ENCODE measurements at regions of chr3 and their contacts with region 1.

Region 1: GRCh38 chr3:149352556-149352955 is 19.1 kb upstream of the TM4SF18 start:
- DNase-seq: no peak

Region 2: GRCh38 chr3:149382091-149382467 is 29.5 kb after region 1 on chr3:
- intact Hi-C with region 1: no loop called
- DNase-seq: no peak

Region 3: DNA sequence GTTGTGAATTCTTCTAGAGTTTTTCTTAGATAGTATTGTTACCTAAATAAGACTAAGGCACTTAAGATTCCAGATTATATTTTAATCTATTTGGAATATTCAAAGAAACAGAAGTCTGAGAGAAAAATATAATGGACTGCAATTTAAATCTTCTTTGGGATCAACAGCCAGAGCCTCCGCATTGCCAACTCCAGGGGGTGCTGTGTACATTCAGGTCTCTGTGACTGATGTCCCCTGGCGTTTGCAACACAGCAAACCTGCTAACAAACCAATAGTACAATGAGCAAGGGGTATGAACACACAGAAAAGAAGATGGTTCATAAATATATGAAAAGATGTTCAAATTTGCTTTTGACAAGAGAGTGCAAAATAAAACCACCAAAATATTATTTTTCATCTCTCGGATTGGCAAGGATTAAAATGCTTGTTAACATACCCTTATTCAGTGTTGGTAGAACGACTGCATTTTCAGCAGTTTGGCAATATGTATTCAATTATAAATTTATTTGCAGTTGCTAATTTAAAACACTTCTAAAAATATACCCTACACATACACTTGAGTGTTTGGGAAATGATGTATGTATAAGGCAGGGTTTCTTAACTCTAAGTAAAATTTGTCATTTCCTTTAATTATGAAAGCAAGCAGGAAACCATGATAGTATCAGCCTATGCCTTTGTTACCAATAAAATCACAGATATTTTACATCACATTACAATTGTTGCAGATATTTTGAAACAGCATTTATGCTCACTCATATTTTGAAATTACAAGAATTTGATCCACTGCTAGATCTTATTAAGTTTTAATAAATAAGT is 41.0 kb after region 1 on chr3:
- intact Hi-C with region 1: loop called (anchors 2 kb)
- DNase-seq: peak; percentile 86

Region 4: GRCh38 chr3:149706905-149707304 is 354.3 kb after region 1 on chr3:
- intact Hi-C with region 1: no loop called
- DNase-seq: no peak